ENCODE measurements at regions of chr3 and their contacts with region 1.

Region 1: DNA sequence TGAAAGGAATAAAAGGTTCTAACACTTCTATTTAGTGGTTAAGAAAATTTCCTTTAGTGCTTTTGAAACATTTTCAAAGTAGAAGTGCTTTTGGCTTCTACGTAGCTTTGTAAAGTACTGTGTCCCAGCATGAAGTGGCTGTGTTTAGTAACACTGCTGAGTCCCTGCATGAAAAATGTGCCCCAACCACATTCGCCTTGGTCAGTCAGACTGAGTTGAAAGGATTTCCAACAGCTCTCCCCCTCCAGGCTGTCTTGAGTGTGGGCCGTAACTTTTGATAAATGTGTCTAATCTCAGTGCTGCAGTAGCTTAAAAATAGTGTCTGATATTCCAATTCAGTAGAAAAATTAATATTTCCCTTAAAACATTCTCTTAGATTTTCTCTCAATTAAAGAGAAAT is 115.0 kb downstream of the NR1D2 start:
- DNase-seq: peak; percentile 17 to 81
- H3K4me3 ChIP-seq: peak overlapping the region in 1 of 2 donors; percentile 8
- H3K27ac ChIP-seq: peak overlapping the region; percentile 71 to 83
- H3K4me1 ChIP-seq: peaks cover 0 to 14% of the 10 kb centered on the region in 2 donors
- H3K27me3 ChIP-seq: no peaks in the 10 kb centered on the region
- CTCF ChIP-seq: peak in 1 of 3 experiments; percentile 20

Region 2: GRCh38 chr3:24037971-24038370 is 22.1 kb before region 1 on chr3:
- intact Hi-C with region 1: no loop called
- DNase-seq: no peak
- H3K4me3 ChIP-seq: no peak overlapping the region
- H3K27ac ChIP-seq: no peak overlapping the region
- H3K4me1 ChIP-seq: peaks cover 0 to 28% of the 10 kb centered on the region in 2 donors
- H3K27me3 ChIP-seq: no peaks in the 10 kb centered on the region
- CTCF ChIP-seq: no peak

Region 3: DNA sequence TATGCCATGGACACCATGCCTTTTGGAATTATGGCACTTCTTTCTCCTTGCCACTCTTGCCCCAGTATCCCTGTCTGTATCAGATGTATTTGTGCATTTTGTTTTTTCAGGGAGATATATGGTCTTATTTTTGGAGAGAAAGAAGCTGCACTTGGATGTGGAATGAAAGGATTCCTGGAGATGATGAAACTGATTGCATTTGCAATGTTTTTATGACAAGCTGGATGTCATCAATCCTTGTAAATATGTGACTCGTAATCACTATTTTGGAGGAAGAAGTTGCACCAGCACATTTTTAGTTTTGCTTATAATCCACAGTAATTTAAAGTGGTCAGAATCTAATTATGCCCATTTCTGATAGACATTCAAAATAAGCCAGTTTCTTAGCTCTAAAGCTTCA is 50.0 kb after region 1 on chr3:
- intact Hi-C with region 1: loop called (anchors 5 kb)
- DNase-seq: no peak
- H3K4me3 ChIP-seq: no peak overlapping the region
- H3K27ac ChIP-seq: no peak overlapping the region
- H3K4me1 ChIP-seq: no peaks in the 10 kb centered on the region
- H3K27me3 ChIP-seq: no peaks in the 10 kb centered on the region
- CTCF ChIP-seq: no peak

Measured in ascending aorta (tissue), 2 donors.